Ovary (tissue), 10 donors: ENCODE measurements at regions of chr11 and their contacts with region 1.

Region 1: GRCh38 chr11:84524422-84525051 is 1102.6 kb downstream of the DLG2 start:
- DNase-seq: no peak
- H3K4me3 ChIP-seq: no peak overlapping the region
- H3K27ac ChIP-seq: no peak overlapping the region
- H3K4me1 ChIP-seq: no peaks in the 10 kb centered on the region
- H3K27me3 ChIP-seq: no peaks in the 10 kb centered on the region
- CTCF ChIP-seq: peak; percentile 17 to 67 (median 57)
- EP300 ChIP-seq: no peak
- POLR2A ChIP-seq: no peak

Region 2: GRCh38 chr11:83836883-83837654 is 687.5 kb before region 1 on chr11:
- intact Hi-C with region 1: loop called in 1 of 4 experiments (anchors 10 kb)
- DNase-seq: peak; percentile 19 to 41 (median 29)
- H3K4me3 ChIP-seq: no peak overlapping the region
- H3K27ac ChIP-seq: no peak overlapping the region
- H3K4me1 ChIP-seq: peaks cover 1% of the 10 kb centered on the region
- H3K27me3 ChIP-seq: no peaks in the 10 kb centered on the region
- CTCF ChIP-seq: peak; percentile 25 to 47 (median 46)
- EP300 ChIP-seq: no peak
- POLR2A ChIP-seq: no peak

Region 3: GRCh38 chr11:84384731-84385130 is 139.8 kb before region 1 on chr11:
- intact Hi-C with region 1: loop called in 1 of 4 experiments (anchors 10 kb)
- DNase-seq: peak in 4 of 5 donors; percentile 14 to 57 (median 26)
- H3K4me3 ChIP-seq: no peak overlapping the region
- H3K27ac ChIP-seq: no peak overlapping the region
- H3K4me1 ChIP-seq: no peaks in the 10 kb centered on the region
- H3K27me3 ChIP-seq: no peaks in the 10 kb centered on the region
- CTCF ChIP-seq: peak; percentile 35 to 42 (median 41)
- EP300 ChIP-seq: no peak
- POLR2A ChIP-seq: no peak

Region 4: GRCh38 chr11:84740050-84740449 is 215.5 kb after region 1 on chr11:
- intact Hi-C with region 1: no loop called
- DNase-seq: no peak
- H3K4me3 ChIP-seq: no peak overlapping the region
- H3K27ac ChIP-seq: no peak overlapping the region
- H3K4me1 ChIP-seq: no peaks in the 10 kb centered on the region
- H3K27me3 ChIP-seq: no peaks in the 10 kb centered on the region
- CTCF ChIP-seq: no peak
- EP300 ChIP-seq: no peak
- POLR2A ChIP-seq: no peak

Region 5: DNA sequence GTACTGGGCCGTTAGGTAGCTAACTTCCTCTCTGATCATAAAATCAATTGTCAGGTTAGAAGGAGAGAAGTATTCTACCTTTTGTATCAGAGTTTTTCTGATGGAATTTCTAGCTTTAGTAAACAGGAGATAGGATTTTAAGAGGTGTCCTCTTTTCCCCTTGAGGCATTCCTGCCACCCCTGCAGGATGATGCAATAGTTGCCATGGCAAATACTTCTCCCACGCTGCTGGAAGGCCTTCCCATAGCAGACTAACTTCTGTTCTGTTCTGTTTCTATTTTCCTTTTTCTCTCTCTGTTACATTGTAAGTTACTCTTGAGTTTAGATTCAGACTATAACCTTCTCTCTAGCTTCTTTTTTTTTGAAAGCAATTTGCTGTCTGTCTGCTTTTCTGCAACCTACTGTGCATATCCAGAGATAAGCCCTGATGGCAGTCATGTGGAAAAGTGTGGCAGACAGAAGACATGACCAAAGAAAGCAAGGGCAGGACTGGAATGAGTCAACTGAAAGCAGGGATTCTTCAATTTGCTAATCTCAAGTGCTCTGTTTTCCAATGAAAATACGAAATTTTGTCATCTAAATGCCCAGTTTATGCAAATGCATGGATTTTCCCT is 423.5 kb after region 1 on chr11:
- intact Hi-C with region 1: no loop called
- DNase-seq: no peak
- H3K4me3 ChIP-seq: no peak overlapping the region
- H3K27ac ChIP-seq: no peak overlapping the region
- H3K4me1 ChIP-seq: no peaks in the 10 kb centered on the region
- H3K27me3 ChIP-seq: no peaks in the 10 kb centered on the region
- CTCF ChIP-seq: no peak
- EP300 ChIP-seq: no peak
- POLR2A ChIP-seq: no peak